HAP-1 (cell line): ENCODE measurements at regions of chr13 and their contacts with region 1.

Region 1: GRCh38 chr13:36858290-36858689 is 39.3 kb downstream of the RFXAP start:
- DNase-seq: peak; percentile 17 to 70
- H3K4me3 ChIP-seq: no peak overlapping the region
- H3K4me1 ChIP-seq: no peaks in the 10 kb centered on the region
- H3K27me3 ChIP-seq: no peaks in the 10 kb centered on the region

Region 2: GRCh38 chr13:36377826-36378468 is 480.3 kb before region 1 on chr13:
- in situ Hi-C with region 1: no loop called
- DNase-seq: no peak
- H3K4me3 ChIP-seq: no peak overlapping the region
- H3K4me1 ChIP-seq: no peaks in the 10 kb centered on the region
- H3K27me3 ChIP-seq: no peaks in the 10 kb centered on the region

Region 3: DNA sequence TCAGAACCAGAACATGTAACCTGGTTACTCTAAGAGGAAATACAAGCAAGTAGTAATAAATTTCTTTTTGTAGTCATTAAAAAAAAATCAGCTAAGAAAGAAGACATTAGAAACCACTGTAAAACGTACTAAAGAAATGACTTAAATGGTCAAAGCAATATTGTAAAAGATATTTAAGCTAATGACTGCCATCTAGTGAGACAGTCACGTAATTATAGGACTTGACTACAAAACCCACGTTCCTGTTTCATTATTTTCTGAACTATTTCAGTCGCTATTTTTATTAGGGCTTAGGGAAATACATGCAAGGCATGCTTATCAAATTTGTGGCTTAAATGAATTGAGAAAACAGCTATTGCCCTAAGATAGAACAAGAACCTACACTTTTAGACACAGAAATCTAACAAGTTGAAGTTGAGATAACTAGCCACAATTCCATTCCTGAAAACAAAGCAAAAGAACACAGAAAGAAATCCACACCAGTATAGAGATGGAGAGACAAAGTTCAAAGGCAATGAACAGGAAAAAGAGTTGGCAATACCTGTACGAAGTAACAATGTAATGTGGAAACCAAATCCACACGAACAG is 123.0 kb after region 1 on chr13:
- in situ Hi-C with region 1: loop called (anchors 10 kb)
- DNase-seq: peak in 1 of 2 experiments; percentile 62
- H3K4me3 ChIP-seq: no peak overlapping the region
- H3K4me1 ChIP-seq: no peaks in the 10 kb centered on the region
- H3K27me3 ChIP-seq: no peaks in the 10 kb centered on the region